HEK293T (cell line): ENCODE measurements at regions of chr16 and their contacts with region 1.

Region 1: DNA sequence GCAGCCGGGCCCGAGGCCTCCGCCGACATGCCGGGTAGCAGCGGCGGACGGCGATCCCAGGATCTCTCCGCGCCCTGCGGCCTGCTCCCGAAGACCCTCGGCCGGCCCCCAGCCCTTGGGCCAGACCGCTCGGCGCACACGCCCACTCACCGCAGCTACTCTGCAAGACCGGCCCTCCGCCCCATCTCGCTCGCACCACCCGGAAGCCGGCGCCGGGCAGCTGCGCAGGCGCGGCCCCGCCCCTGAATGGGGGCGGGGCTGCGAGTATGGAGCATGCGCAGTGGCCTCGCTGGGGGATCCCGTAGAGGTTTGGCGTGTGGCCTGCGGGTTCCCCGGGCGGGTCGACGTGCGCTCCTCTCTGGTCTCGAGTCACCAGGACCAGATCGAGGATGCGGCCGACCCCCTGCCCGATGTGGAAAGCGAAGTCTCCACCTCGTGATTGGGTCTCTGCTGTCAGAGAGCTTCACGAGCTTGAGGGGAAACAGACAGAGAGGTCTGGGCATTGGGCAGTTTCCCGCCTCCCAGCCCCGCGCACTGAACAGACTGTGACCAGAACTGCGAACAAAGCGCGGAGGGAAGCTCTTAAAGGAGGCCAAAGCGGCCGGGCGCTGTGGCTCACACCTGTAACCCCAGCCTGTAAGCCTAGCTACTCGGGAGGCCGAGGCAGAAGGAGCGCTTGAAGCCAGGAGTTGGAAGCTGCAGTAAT is at the start of gene KCTD13:
- DNase-seq: peak; percentile 100

Region 2: GRCh38 chr16:29900102-29900887 is 25.9 kb before region 1 on chr16 and contains the start of gene ASPHD1:
- CTCF ChIA-PET with region 1: no interaction called
- POLR2A ChIA-PET with region 1: interaction called, 41 read pairs
- DNase-seq: peak; percentile 92

Region 3: DNA sequence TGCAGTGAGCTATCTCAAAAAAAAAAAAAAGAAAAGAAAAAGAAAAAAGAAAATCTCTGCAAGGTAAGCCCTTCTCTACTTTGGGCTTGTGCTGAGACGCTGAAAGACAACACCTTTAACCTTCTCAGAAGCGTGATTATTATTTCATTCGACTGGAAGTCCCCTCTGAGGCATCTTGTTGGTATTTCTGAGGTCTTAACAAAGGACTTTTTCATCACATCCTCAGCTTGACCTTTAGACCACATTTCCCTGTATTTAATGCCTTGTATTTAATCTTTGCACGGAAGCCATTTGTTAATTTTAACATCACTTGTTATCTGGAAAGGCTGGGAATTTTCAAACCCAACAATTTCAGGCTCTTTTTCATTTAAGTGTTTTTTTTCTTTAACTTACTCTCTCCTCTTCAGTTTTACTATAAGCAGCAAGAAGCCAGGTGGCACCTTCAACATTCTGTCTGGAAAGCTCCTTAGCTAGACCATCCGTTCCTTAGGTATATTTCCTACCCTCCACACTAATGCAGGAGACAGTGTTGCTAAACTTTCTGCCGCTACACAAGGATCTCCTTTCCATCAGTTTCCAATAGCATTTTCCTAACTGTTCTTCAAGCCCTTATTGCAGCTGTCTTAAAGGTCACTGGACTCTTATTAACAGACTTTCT is 10.4 kb before region 1 on chr16:
- CTCF ChIA-PET with region 1: interaction called, 3 read pairs
- POLR2A ChIA-PET with region 1: interaction called, 27 read pairs
- DNase-seq: no peak

Region 4: GRCh38 chr16:29961479-29962343 is 35.6 kb after region 1 on chr16 and contains the start of gene TMEM219:
- CTCF ChIA-PET with region 1: interaction called, 3 read pairs
- POLR2A ChIA-PET with region 1: interaction called, 41 read pairs
- DNase-seq: peak; percentile 100

Region 5: GRCh38 chr16:29983420-29984136 is 57.4 kb after region 1 on chr16:
- CTCF ChIA-PET with region 1: no interaction called
- POLR2A ChIA-PET with region 1: interaction called, 10 read pairs
- DNase-seq: no peak

Region 6: GRCh38 chr16:30032083-30032819 is 106.1 kb after region 1 on chr16:
- CTCF ChIA-PET with region 1: no interaction called
- POLR2A ChIA-PET with region 1: interaction called, 11 read pairs
- DNase-seq: peak; percentile 89